Activated CD8-positive, alpha-beta T cell treated with anti-CD3 and anti-CD28 coated beads for 36 hours (primary cell): ENCODE measurements at regions of chr17 and their contacts with region 1.

Region 1: DNA sequence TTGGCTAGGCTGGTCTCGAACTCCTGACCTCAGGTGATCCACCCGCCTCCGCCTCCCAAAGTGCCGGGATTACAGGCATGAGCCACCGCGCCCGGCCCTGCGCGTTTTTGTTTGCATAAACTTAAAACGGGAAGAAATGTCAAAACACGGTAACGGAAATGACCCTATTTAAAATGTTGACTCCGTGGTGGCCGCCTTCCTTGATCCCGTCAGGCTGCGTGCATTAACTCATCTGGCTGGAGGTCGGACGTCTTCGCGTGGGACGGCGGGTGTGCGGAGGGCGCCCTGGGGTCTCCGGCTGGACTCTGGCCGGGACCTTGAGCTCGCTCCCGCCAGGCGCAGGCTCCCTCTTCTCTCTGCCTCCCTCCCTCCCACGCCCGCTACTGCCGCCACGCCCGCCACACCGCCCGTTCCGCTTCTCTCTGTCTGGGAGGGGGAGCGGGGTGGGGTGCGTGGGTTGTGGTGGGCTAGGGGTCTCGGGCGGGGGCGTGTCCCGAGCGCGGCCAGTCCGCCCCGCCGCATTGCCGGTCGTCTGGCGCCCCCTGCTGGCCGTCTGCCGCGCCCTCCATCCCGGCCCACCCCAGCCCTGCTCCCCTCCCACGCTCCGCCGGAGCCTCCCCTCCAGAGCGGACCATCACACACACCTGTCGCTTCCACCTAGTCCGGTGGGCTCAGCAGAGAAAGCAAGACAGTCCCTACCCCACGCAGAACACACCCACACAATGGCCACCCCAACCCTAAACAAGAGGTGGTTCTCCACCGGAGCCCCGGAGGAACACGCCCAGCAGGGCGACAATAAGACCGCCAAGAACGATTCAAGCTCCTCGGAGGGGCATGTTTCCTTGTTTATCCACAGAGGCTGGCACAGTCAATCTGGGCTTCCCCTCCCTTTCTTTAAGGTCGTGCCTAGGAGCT is 1.2 kb upstream of the CCDC42 start:
- DNase-seq: peak; percentile 83
- ATAC-seq: peak; percentile 74
- H3K4me3 Mint-ChIP-seq: peak overlapping the region; percentile 82
- H3K27ac Mint-ChIP-seq: peak overlapping the region; percentile 88
- H3K4me1 Mint-ChIP-seq: peaks cover 12% of the 10 kb centered on the region
- H3K27me3 Mint-ChIP-seq: no peaks in the 10 kb centered on the region
- CTCF ChIP-seq: peak; percentile 99

Region 2: GRCh38 chr17:8574687-8575086 is 171.2 kb before region 1 on chr17:
- CTCF ChIA-PET with region 1: interaction called, 11 read pairs
- POLR2A ChIA-PET with region 1: no interaction called
- intact Hi-C with region 1: no loop called
- DNase-seq: no peak
- ATAC-seq: no peak
- H3K4me3 Mint-ChIP-seq: no peak overlapping the region
- H3K27ac Mint-ChIP-seq: no peak overlapping the region
- H3K4me1 Mint-ChIP-seq: no peaks in the 10 kb centered on the region
- H3K27me3 Mint-ChIP-seq: no peaks in the 10 kb centered on the region
- CTCF ChIP-seq: no peak